Activated CD4-positive, alpha-beta memory T cell treated with anti-CD3 and anti-CD28 coated beads, Interleukin-2, amount 10 ng/mL, durations not matched to agents 7 days and 5 days (primary cell): ENCODE measurements at regions of chr14 and their contacts with region 1.

Region 1: DNA sequence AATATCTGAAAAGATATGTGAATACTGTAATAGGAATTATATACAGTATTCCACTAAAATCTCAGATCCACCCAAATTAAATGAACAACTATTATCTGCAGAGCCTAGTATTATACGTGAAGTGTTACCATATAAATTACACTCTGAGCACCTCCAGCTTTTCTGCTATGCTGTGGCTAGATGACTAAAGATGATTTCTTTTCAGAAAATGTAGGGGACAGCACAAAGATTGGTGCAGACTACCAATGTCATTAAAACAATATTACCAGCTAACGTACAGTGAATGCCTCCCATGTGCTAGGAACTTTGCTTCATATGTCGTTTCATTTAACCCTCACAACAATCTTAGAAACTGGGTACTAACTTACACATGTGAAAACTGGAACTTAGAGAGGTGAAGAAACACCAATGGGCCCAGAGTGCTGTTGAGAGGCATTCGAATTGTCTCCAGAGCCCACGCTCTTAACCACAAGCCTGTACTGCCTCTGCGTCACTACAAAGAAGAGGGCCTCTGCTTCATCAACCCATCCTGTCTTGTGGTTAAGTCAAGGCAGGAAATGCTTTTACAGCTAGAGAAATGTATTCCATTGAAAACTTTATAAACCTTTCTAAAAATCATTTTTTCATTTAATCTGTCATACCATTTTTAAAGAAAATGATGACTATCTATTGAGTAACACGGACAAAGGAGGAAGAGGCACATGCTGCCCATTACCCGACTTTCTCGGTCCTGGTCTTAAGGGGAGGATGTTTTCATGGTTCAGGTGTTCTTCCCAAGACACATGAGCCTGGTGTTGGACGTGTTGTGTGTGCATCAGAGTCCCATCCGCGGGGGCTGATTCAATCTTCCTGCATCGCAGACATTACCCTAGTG is 1.3 kb downstream of the GPR65 start:
- DNase-seq: peak; percentile 76
- H3K4me3 Mint-ChIP-seq: peak overlapping the region; percentile 79
- H3K27ac Mint-ChIP-seq: peak overlapping the region; percentile 97
- H3K4me1 Mint-ChIP-seq: peaks cover 60% of the 10 kb centered on the region
- H3K27me3 Mint-ChIP-seq: no peaks in the 10 kb centered on the region

Region 2: DNA sequence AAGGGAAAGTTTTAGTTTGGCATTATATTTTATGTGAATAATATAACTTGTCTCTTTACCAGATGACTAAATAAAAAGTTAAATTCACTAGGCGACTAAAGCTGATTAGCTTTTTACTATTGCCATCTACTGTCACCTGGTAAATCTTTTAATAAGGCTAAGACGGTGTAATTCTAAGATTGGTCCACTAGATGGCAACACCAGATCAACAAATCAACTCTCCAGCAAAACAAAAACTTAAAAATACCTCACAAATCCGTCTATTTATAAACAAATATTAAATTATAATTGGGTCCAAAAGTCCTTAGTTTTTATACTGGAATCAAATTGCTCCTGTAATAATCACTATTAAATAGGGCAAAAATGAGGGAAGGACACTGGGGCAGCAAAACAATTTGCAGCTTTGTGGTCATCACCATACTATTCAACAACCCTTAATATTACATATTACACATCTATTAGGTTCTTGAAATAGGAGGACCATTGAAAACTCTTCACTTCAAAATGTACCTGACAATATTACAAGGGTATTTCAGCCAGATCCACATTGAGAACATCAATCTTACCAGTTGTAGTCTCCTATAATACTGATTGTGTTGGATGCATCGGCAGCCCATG is 61.1 kb before region 1 on chr14:
- CTCF ChIA-PET with region 1: interaction called, 22 read pairs
- POLR2A ChIA-PET with region 1: interaction called, 6 read pairs
- DNase-seq: no peak
- H3K4me3 Mint-ChIP-seq: no peak overlapping the region
- H3K27ac Mint-ChIP-seq: no peak overlapping the region
- H3K4me1 Mint-ChIP-seq: peaks cover 5% of the 10 kb centered on the region
- H3K27me3 Mint-ChIP-seq: no peaks in the 10 kb centered on the region

Region 3: GRCh38 chr14:87952307-87953094 is 53.7 kb before region 1 on chr14:
- CTCF ChIA-PET with region 1: interaction called, 22 read pairs
- POLR2A ChIA-PET with region 1: interaction called, 52 read pairs
- DNase-seq: no peak
- H3K4me3 Mint-ChIP-seq: peak overlapping the region; percentile 65
- H3K27ac Mint-ChIP-seq: peak overlapping the region; percentile 88
- H3K4me1 Mint-ChIP-seq: peaks cover 32% of the 10 kb centered on the region
- H3K27me3 Mint-ChIP-seq: no peaks in the 10 kb centered on the region

Region 4: DNA sequence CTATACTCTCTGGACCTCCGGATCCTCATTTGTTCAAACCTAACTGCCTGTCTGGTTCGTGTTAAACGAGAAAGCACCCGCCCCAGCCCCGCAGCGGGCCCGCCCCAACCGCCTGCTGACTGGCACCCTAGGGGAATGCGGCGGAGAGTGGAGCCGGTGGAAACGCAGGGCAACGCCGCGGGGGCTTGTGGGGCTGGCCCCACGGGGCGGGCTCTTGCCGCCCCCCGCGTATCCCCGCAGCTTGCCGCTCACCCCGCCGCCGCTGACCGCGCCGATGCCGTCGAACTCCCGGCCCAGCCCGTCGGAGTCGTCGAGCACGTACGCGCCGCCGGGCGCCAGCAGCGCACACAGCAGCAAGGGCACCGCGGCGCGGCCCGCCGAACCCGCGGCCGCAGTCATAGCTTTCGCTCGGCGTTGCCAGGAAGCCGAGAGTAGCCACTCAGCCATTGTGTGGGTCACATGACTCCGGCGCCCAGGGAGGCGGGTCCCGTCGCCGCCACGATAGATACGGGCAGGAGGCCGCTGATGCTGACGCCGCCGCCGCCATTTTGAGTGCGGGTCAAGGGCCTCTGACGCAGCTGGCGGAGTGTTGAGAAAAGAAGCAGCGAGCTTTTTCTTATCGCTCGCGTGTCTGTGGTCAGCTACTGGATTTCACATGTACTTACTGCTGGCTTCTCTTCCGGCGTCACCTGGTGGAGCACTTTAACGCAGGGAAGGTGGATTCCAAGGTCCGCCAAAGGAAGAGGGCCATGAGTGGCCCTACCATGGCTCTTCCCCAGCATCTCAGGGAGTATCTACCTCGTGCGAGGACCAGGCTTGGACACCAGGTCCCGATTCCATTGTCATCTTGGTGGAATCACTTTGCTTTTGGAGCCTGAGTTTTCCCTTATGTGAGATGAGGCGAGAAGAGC is 13.2 kb before region 1 on chr14 and contains the start of gene GALC:
- CTCF ChIA-PET with region 1: interaction called, 9 read pairs
- POLR2A ChIA-PET with region 1: interaction called, 140 read pairs
- DNase-seq: peak; percentile 97
- H3K4me3 Mint-ChIP-seq: peak within 1 kb of the TSS; percentile 80
- H3K27ac Mint-ChIP-seq: peak within 1 kb of the TSS; percentile 91
- H3K4me1 Mint-ChIP-seq: peaks cover 56% of the 10 kb centered on the region
- H3K27me3 Mint-ChIP-seq: no peaks in the 10 kb centered on the region
- total RNA-seq, gene GALC: 24.3 to 27.6 TPM

Region 5: DNA sequence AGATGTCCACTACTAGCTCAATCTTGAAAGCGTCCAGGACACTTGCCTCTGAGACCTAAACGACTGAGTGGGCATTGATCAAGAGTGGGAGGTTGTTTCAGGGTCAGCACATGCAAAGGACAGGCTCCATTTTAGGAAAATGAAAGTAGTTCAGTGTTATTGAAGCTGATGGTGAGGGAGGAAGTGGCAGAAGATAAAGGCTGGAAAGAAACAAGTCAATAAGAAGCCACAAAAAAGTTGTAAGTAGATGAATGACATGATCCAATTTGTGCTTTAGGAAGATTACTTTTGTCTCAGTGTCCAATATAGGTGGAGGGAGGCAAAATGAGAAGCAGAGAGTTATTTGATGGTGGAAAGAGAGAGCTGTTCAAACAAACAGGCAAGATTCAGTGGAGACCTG is 20.7 kb after region 1 on chr14:
- CTCF ChIA-PET with region 1: no interaction called
- POLR2A ChIA-PET with region 1: interaction called, 20 read pairs
- DNase-seq: no peak
- H3K4me3 Mint-ChIP-seq: peak overlapping the region; percentile 12
- H3K27ac Mint-ChIP-seq: peak overlapping the region; percentile 74
- H3K4me1 Mint-ChIP-seq: peaks cover 58% of the 10 kb centered on the region
- H3K27me3 Mint-ChIP-seq: no peaks in the 10 kb centered on the region